T-cell (primary cell): ENCODE measurements at regions of chr12 and their contacts with region 1.

Region 1: GRCh38 chr12:25195056-25195971 is at the starts of genes DNAI7 and ETFRF1:
- DNase-seq: peak; percentile 85 to 99 (median 96)
- ATAC-seq: peak; percentile 96 to 98 (median 96)
- H3K4me3 ChIP-seq: peak within 1 kb of the TSS; percentile 71 to 94
- H3K4me3 Mint-ChIP-seq: peak within 1 kb of the TSS; percentile 96 to 99 (median 99)
- H3K27ac ChIP-seq: peak within 1 kb of the TSS; percentile 92
- H3K27ac Mint-ChIP-seq: peak within 1 kb of the TSS; percentile 99
- H3K4me1 ChIP-seq: peaks cover 5 to 21% of the 10 kb centered on the region in 2 experiments
- H3K4me1 Mint-ChIP-seq: peaks cover 34 to 39% (median 37%) of the 10 kb centered on the region in 3 donors
- H3K27me3 ChIP-seq: no peaks in the 10 kb centered on the region
- H3K27me3 Mint-ChIP-seq: no peaks in the 10 kb centered on the region
- total RNA-seq, gene DNAI7: 0.16 to 0.90 (median 0.30) TPM in 3 of 5 donors, not detected in the others
- total RNA-seq, gene ETFRF1: 20.0 to 34.4 (median 22.1) TPM

Region 2: GRCh38 chr12:24997970-24998582 is 197.2 kb before region 1 on chr12:
- CTCF ChIA-PET with region 1: no interaction called
- POLR2A ChIA-PET with region 1: interaction called in 1 of 2 experiments, 11 read pairs
- DNase-seq: peak in 1 of 35 experiments; percentile 24
- ATAC-seq: peak in 1 of 4 experiments; percentile 29
- H3K4me3 ChIP-seq: no peak overlapping the region
- H3K4me3 Mint-ChIP-seq: no peak overlapping the region
- H3K27ac ChIP-seq: no peak overlapping the region
- H3K27ac Mint-ChIP-seq: peak overlapping the region in 1 of 2 donors; percentile 11
- H3K4me1 ChIP-seq: peaks cover 0 to 3% of the 10 kb centered on the region in 2 experiments
- H3K4me1 Mint-ChIP-seq: peaks cover 12 to 22% (median 14%) of the 10 kb centered on the region in 3 donors
- H3K27me3 ChIP-seq: peaks cover 0 to 3% of the 10 kb centered on the region in 2 experiments
- H3K27me3 Mint-ChIP-seq: peaks cover 0 to 2% of the 10 kb centered on the region in 2 donors

Region 3: DNA sequence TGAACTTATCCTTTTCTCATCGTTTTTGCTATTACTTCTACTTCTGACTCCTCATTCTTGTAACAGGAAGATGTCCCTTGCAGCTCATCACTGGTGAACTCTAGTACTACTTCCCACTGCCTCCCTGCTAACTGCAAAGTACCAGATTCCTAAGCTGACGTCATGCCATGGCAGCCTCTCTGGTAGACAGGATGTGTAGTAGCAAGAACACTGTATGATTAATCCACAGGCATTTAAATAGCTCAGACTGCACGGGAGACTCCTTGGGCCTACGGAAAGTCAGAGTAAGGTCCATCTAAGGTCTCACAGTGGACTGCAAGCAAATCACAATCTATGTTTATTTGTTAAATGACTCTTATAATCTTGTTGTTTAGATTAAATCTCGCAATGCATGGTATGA is 43.8 kb before region 1 on chr12:
- CTCF ChIA-PET with region 1: interaction called, 4 to 17 read pairs
- POLR2A ChIA-PET with region 1: no interaction called
- DNase-seq: no peak
- ATAC-seq: no peak
- H3K4me3 ChIP-seq: no peak overlapping the region
- H3K4me3 Mint-ChIP-seq: no peak overlapping the region
- H3K27ac ChIP-seq: no peak overlapping the region
- H3K27ac Mint-ChIP-seq: no peak overlapping the region
- H3K4me1 ChIP-seq: no peaks in the 10 kb centered on the region
- H3K4me1 Mint-ChIP-seq: peaks cover 7 to 11% (median 8%) of the 10 kb centered on the region in 3 donors
- H3K27me3 ChIP-seq: no peaks in the 10 kb centered on the region
- H3K27me3 Mint-ChIP-seq: no peaks in the 10 kb centered on the region

Region 4: GRCh38 chr12:25162866-25163265 is 32.4 kb before region 1 on chr12:
- CTCF ChIA-PET with region 1: no interaction called
- POLR2A ChIA-PET with region 1: no interaction called
- DNase-seq: no peak
- ATAC-seq: no peak
- H3K4me3 ChIP-seq: no peak overlapping the region
- H3K4me3 Mint-ChIP-seq: no peak overlapping the region
- H3K27ac ChIP-seq: no peak overlapping the region
- H3K27ac Mint-ChIP-seq: no peak overlapping the region
- H3K4me1 ChIP-seq: no peaks in the 10 kb centered on the region
- H3K4me1 Mint-ChIP-seq: no peaks in the 10 kb centered on the region
- H3K27me3 ChIP-seq: peaks cover 0 to 2% of the 10 kb centered on the region in 2 experiments
- H3K27me3 Mint-ChIP-seq: no peaks in the 10 kb centered on the region

Region 5: DNA sequence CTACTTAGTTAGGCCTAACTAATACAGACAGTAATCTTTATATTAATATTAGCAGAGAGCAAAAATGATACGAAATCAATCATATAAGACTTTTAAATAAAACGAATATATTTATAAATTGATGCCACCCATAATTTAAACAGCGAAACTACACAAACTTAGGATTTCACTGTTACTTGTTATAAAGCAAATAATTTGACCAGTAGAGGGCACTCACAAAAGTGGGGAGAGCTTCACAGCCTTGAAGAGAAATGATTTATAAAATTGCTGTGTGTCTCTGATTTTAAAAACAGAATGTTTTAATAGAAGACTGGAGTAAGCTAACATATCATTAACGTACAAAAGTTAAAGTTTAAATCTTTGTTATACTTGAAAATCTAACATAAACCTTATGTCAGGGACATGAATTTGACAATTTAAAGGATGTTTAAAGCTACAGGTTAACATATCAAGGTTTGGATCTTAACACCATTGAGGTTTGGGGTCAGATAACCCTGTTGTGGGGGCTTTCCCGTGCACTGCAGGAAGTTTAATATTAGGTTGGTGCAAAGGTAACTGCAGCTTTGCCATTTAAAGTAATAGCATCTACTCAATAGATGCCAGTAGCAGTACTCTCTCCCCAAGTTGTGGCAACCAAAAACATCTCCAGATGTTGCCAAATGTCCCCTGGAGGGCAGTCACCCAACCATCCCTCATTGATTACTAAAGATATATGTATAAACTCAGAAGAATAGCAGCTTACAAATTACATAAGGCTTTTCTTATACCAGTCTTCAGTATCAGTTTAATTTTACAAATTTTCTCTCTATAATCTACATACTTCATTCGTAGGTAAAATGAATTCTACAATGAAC is 46.1 kb after region 1 on chr12:
- CTCF ChIA-PET with region 1: interaction called, 3 to 10 read pairs
- POLR2A ChIA-PET with region 1: interaction called in 1 of 2 experiments, 7 read pairs
- DNase-seq: peak in 28 of 35 experiments; percentile 16 to 75 (median 34)
- ATAC-seq: peak; percentile 75 to 91 (median 79)
- H3K4me3 ChIP-seq: no peak overlapping the region
- H3K4me3 Mint-ChIP-seq: no peak overlapping the region
- H3K27ac ChIP-seq: peak overlapping the region; percentile 60
- H3K27ac Mint-ChIP-seq: peak overlapping the region; percentile 43 to 81
- H3K4me1 ChIP-seq: peaks cover 4 to 10% of the 10 kb centered on the region in 2 experiments
- H3K4me1 Mint-ChIP-seq: peaks cover 49 to 70% (median 58%) of the 10 kb centered on the region in 3 donors
- H3K27me3 ChIP-seq: no peaks in the 10 kb centered on the region
- H3K27me3 Mint-ChIP-seq: no peaks in the 10 kb centered on the region

Region 6: GRCh38 chr12:25250744-25251730 is 55.7 kb after region 1 on chr12 and contains the start of gene KRAS:
- CTCF ChIA-PET with region 1: no interaction called
- POLR2A ChIA-PET with region 1: interaction called, 3 to 11 read pairs
- DNase-seq: peak; percentile 78 to 97 (median 88)
- ATAC-seq: peak; percentile 87 to 91 (median 89)
- H3K4me3 ChIP-seq: peak within 1 kb of the TSS; percentile 74 to 82
- H3K4me3 Mint-ChIP-seq: peak within 1 kb of the TSS; percentile 87 to 91 (median 91)
- H3K27ac ChIP-seq: peak within 1 kb of the TSS; percentile 51
- H3K27ac Mint-ChIP-seq: peak within 1 kb of the TSS; percentile 88 to 89
- H3K4me1 ChIP-seq: peaks cover 8 to 28% of the 10 kb centered on the region in 2 experiments
- H3K4me1 Mint-ChIP-seq: peaks cover 43 to 54% (median 45%) of the 10 kb centered on the region in 3 donors
- H3K27me3 ChIP-seq: no peaks in the 10 kb centered on the region
- H3K27me3 Mint-ChIP-seq: no peaks in the 10 kb centered on the region
- total RNA-seq, gene KRAS: 29.1 to 44.1 (median 31.5) TPM

Region 7: GRCh38 chr12:25332143-25332542 is 136.8 kb after region 1 on chr12:
- CTCF ChIA-PET with region 1: no interaction called
- POLR2A ChIA-PET with region 1: no interaction called
- DNase-seq: no peak
- ATAC-seq: no peak
- H3K4me3 ChIP-seq: no peak overlapping the region
- H3K4me3 Mint-ChIP-seq: no peak overlapping the region
- H3K27ac ChIP-seq: no peak overlapping the region
- H3K27ac Mint-ChIP-seq: no peak overlapping the region
- H3K4me1 ChIP-seq: no peaks in the 10 kb centered on the region
- H3K4me1 Mint-ChIP-seq: peaks cover 6 to 27% (median 14%) of the 10 kb centered on the region in 3 donors
- H3K27me3 ChIP-seq: no peaks in the 10 kb centered on the region
- H3K27me3 Mint-ChIP-seq: no peaks in the 10 kb centered on the region

Region 8: DNA sequence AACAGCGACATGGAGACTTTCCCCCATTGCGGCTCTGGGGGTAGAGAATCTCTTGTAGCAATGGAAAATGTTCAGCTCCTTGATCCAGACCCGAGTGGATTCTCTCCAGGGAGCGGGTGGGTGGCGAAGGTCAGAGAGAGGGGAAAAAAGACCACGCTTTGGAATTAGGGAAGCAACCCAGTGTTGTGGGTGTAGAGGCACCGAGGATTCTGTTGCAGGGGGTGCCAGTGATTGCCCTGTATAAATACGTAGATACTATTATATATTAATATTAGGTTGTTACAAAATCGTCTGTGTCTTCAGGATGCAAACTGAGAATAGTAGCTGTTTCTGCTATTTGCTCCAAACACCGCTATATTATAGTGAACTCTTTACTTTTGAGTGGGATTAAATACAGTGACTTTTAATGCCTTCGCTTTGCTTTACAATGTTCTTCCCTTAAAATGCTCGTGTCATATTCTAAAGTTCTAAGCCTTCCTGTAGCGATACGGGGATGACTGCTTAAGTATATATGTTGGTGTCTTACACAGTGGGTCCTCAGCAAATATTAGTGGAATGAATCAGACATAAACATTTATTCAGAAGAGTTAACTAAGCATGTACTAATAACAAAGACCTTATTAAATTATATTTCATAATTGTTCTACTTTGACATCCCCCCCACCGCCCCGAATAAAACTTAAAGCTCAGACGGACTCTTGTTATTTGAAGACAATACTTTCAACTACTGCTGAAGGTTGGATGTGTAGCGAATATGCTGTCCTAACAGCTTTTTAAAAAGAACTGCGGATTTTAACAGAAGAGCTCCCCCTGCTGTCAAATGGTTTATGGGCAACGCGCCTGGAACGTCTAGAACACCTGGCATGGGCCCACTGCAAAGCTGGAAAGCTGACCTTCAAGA is 191.8 kb after region 1 on chr12:
- CTCF ChIA-PET with region 1: interaction called, 12 to 33 read pairs
- POLR2A ChIA-PET with region 1: no interaction called
- DNase-seq: peak; percentile 49 to 92 (median 70)
- ATAC-seq: peak in 3 of 4 experiments; percentile 7 to 10 (median 9)
- H3K4me3 ChIP-seq: peak overlapping the region; percentile 69 to 92
- H3K4me3 Mint-ChIP-seq: peak overlapping the region; percentile 94 to 98 (median 94)
- H3K27ac ChIP-seq: peak overlapping the region; percentile 98
- H3K27ac Mint-ChIP-seq: peak overlapping the region; percentile 99 to 100
- H3K4me1 ChIP-seq: peaks cover 19 to 36% of the 10 kb centered on the region in 2 experiments
- H3K4me1 Mint-ChIP-seq: peaks cover 40 to 58% (median 53%) of the 10 kb centered on the region in 3 donors
- H3K27me3 ChIP-seq: no peaks in the 10 kb centered on the region
- H3K27me3 Mint-ChIP-seq: no peaks in the 10 kb centered on the region

Region 9: DNA sequence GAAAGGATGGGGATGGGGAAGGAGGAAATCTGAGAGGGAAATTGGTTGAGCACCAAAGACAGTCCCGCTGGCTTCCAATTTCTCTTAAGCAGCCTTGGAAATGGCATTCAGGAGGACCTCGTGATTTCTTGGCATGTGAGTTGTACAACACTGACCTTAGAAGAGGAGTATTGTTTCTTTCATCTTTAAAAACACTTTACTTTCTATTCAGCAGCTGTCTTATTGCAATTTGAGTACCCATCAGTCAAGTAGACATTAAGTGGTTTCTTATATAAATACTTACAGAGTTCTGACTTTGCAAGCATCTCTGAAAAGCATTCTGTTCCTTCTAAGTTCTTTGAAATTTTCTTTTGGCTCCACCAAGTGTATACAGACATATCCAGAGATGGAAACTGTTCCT is 274.5 kb after region 1 on chr12:
- CTCF ChIA-PET with region 1: no interaction called
- POLR2A ChIA-PET with region 1: no interaction called
- DNase-seq: no peak
- ATAC-seq: no peak
- H3K4me3 ChIP-seq: no peak overlapping the region
- H3K4me3 Mint-ChIP-seq: no peak overlapping the region
- H3K27ac ChIP-seq: no peak overlapping the region
- H3K27ac Mint-ChIP-seq: no peak overlapping the region
- H3K4me1 ChIP-seq: no peaks in the 10 kb centered on the region
- H3K4me1 Mint-ChIP-seq: no peaks in the 10 kb centered on the region
- H3K27me3 ChIP-seq: no peaks in the 10 kb centered on the region
- H3K27me3 Mint-ChIP-seq: peaks cover 0 to 2% of the 10 kb centered on the region in 2 donors

Region 10: GRCh38 chr12:25713264-25713663 is 518.0 kb after region 1 on chr12:
- CTCF ChIA-PET with region 1: no interaction called
- POLR2A ChIA-PET with region 1: no interaction called
- DNase-seq: no peak
- ATAC-seq: no peak
- H3K4me3 ChIP-seq: no peak overlapping the region
- H3K4me3 Mint-ChIP-seq: no peak overlapping the region
- H3K27ac ChIP-seq: no peak overlapping the region
- H3K27ac Mint-ChIP-seq: no peak overlapping the region
- H3K4me1 ChIP-seq: no peaks in the 10 kb centered on the region
- H3K4me1 Mint-ChIP-seq: peaks cover 0 to 16% (median 6%) of the 10 kb centered on the region in 3 donors
- H3K27me3 ChIP-seq: no peaks in the 10 kb centered on the region
- H3K27me3 Mint-ChIP-seq: no peaks in the 10 kb centered on the region